CD8-positive, alpha-beta T cell (primary cell): ENCODE measurements at regions of chr20 and their contacts with region 1.

Region 1: GRCh38 chr20:45322952-45323383 is 14.9 kb upstream of the MATN4 start:
- DNase-seq: peak in 1 of 9 experiments; percentile 26
- ATAC-seq: no peak
- H3K4me3 ChIP-seq: no peak overlapping the region
- H3K4me3 Mint-ChIP-seq: no peak overlapping the region
- H3K27ac ChIP-seq: no peak overlapping the region
- H3K27ac Mint-ChIP-seq: no peak overlapping the region
- H3K4me1 ChIP-seq: peaks cover 26% of the 10 kb centered on the region
- H3K4me1 Mint-ChIP-seq: peaks cover 17% of the 10 kb centered on the region
- H3K27me3 ChIP-seq: no peaks in the 10 kb centered on the region
- H3K27me3 Mint-ChIP-seq: no peaks in the 10 kb centered on the region
- CTCF ChIP-seq: no peak

Region 2: GRCh38 chr20:45311589-45312211 is 11.3 kb before region 1 on chr20:
- CTCF ChIA-PET with region 1: interaction called, 11 read pairs
- POLR2A ChIA-PET with region 1: no interaction called
- intact Hi-C with region 1: no loop called
- DNase-seq: peak; percentile 24 to 69 (median 52)
- ATAC-seq: peak; percentile 66
- H3K4me3 ChIP-seq: no peak overlapping the region
- H3K4me3 Mint-ChIP-seq: no peak overlapping the region
- H3K27ac ChIP-seq: no peak overlapping the region
- H3K27ac Mint-ChIP-seq: no peak overlapping the region
- H3K4me1 ChIP-seq: no peaks in the 10 kb centered on the region
- H3K4me1 Mint-ChIP-seq: peaks cover 6% of the 10 kb centered on the region
- H3K27me3 ChIP-seq: peaks cover 0 to 10% of the 10 kb centered on the region in 2 experiments
- H3K27me3 Mint-ChIP-seq: peaks cover 48% of the 10 kb centered on the region
- CTCF ChIP-seq: peak; percentile 67

Region 3: GRCh38 chr20:45373353-45374100 is 50.6 kb after region 1 on chr20:
- CTCF ChIA-PET with region 1: interaction called, 10 read pairs
- POLR2A ChIA-PET with region 1: interaction called, 4 read pairs
- intact Hi-C with region 1: no loop called
- DNase-seq: peak; percentile 81 to 94 (median 91)
- ATAC-seq: peak; percentile 89
- H3K4me3 ChIP-seq: peak overlapping the region; percentile 57 to 64
- H3K4me3 Mint-ChIP-seq: peak overlapping the region; percentile 89
- H3K27ac ChIP-seq: peak overlapping the region; percentile 51 to 85
- H3K27ac Mint-ChIP-seq: peak overlapping the region; percentile 91
- H3K4me1 ChIP-seq: peaks cover 14% of the 10 kb centered on the region
- H3K4me1 Mint-ChIP-seq: peaks cover 37% of the 10 kb centered on the region
- H3K27me3 ChIP-seq: no peaks in the 10 kb centered on the region
- H3K27me3 Mint-ChIP-seq: no peaks in the 10 kb centered on the region
- CTCF ChIP-seq: peak; percentile 90

Region 4: GRCh38 chr20:45450097-45450818 is 127.3 kb after region 1 on chr20:
- CTCF ChIA-PET with region 1: interaction called, 70 read pairs
- POLR2A ChIA-PET with region 1: no interaction called
- intact Hi-C with region 1: loop called (anchors 1 kb)
- DNase-seq: peak in 2 of 9 experiments; percentile 56 to 66
- ATAC-seq: peak; percentile 52
- H3K4me3 ChIP-seq: no peak overlapping the region
- H3K4me3 Mint-ChIP-seq: no peak overlapping the region
- H3K27ac ChIP-seq: no peak overlapping the region
- H3K27ac Mint-ChIP-seq: no peak overlapping the region
- H3K4me1 ChIP-seq: no peaks in the 10 kb centered on the region
- H3K4me1 Mint-ChIP-seq: peaks cover under 1% of the 10 kb centered on the region
- H3K27me3 ChIP-seq: no peaks in the 10 kb centered on the region
- H3K27me3 Mint-ChIP-seq: peaks cover 7% of the 10 kb centered on the region
- CTCF ChIP-seq: peak; percentile 64

Region 5: DNA sequence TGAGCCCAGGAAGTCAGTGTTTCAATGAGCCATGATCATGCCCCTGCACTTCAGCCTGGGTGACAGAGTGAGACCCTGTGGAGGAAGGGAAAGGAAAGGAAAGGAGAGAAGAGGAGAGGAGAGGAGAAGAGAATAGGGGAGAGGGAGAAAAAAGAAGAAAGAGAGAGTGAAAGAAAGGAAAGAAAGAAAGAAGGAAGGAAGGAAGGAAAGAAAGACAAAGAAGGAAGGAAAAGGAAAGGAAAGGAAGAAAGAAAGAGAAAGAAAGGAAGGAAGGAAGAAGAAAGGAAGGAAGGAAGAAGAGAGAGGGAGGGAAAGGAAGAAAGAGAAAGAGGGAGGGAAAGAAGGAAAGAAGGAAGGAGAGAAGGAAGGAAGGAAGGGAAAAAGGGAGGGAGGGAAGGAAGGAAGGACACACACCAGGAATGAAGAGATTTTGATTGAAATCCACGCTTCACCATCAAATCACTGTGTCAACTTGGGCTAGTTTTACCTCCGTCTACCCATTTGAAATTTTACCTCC is 241.8 kb after region 1 on chr20:
- CTCF ChIA-PET with region 1: no interaction called
- POLR2A ChIA-PET with region 1: no interaction called
- intact Hi-C with region 1: no loop called
- DNase-seq: no peak
- ATAC-seq: no peak
- H3K4me3 ChIP-seq: no peak overlapping the region
- H3K4me3 Mint-ChIP-seq: no peak overlapping the region
- H3K27ac ChIP-seq: no peak overlapping the region
- H3K27ac Mint-ChIP-seq: no peak overlapping the region
- H3K4me1 ChIP-seq: no peaks in the 10 kb centered on the region
- H3K4me1 Mint-ChIP-seq: no peaks in the 10 kb centered on the region
- H3K27me3 ChIP-seq: no peaks in the 10 kb centered on the region
- H3K27me3 Mint-ChIP-seq: peaks cover 28% of the 10 kb centered on the region
- CTCF ChIP-seq: no peak